Lower leg skin (tissue), 4 donors: ENCODE measurements at regions of chr6 and their contacts with region 1.

Region 1: DNA sequence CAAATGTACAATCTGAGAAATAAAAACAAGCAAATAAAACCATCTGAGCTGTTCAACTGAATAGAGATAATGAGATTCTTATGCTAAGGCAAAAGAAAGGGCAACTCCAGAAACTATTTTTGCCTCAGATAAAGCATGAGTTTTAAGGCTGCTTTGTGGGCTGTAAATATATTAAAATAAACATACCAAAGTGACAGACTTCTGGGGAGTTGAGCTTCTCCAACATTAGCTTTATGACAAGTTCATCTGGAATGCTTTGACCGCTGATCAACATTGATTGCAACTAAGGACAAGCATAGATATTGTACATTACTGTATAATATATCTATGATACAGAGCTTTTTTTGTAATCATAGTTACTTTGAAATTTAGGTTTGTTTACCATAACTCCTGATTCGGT is 19.3 kb downstream of the AK9 start:
- DNase-seq: no peak
- H3K4me3 ChIP-seq: no peak overlapping the region
- CTCF ChIP-seq: no peak
- POLR2A ChIP-seq: no peak

Region 2: DNA sequence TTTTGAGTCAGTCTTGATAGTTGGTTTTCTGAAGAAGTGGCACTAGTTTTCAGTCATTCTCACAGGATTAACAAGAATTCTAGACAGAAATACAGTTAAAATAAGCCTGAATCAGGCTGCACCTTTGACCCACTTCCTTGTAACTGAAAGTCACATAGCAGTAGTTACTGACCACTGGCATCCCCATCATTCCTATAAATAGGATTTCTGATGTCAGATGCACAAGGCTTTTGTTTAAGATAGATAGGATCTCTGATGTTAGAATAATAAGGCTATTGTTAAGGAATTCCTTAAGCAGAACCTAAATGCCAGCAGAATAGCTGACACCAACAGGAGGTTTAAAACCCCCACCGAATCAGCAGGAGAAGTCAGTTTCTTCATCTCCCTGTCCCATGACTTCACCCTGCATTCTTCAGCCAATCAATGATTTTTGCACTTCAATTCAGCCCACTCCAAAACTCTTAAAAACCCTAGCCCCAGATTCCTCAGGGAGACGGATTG is 158.1 kb before region 1 on chr6:
- intact Hi-C with region 1: loop called (anchors 10 kb)
- DNase-seq: no peak
- H3K4me3 ChIP-seq: no peak overlapping the region
- CTCF ChIP-seq: no peak
- POLR2A ChIP-seq: no peak

Region 3: DNA sequence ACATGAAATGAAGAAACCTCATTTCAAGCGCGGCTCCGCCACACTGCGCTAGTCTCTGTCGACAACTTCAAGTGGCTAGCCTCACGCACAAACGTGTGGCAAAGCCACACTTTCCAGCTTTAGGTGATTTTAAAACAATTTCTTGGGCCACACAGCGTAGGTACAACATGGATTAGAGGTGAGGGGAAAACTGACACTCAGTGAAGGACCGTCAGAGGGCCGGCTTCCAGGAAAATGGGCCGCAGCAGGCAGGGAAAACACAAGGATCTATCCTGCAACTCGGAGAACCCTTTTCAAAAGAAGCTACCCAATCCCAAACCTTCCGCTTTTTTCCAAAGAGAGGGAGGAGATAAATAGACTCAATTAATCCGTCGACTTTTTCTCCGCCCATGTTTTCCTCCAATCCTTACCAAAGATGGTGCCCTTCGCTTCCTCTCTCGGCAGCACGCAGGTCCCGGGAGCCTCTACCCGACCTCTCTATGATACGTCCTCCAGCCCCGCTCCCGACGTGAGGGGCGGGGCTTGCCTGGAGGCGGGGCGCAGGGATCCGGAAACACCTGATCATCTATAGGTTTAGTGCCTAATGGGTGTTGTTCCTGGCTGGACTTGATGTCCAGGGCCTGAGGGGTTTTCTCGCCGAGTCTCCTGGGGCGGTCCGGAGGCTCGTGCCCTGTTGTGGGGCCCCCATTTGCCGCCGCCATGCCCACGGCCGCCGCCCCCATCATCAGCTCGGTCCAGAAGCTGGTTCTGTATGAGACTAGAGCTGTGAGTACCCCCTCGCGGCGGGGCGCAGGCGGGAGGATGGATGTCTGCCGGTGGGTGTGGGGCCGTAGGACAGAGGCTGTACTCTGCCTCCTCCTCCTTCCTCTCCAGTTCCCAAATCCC is 19.2 kb after region 1 on chr6 and contains the starts of genes AK9 and FIG4:
- intact Hi-C with region 1: no loop called
- DNase-seq: peak; percentile 95 to 98
- H3K4me3 ChIP-seq: peak within 1 kb of the TSS; percentile 80
- CTCF ChIP-seq: no peak
- POLR2A ChIP-seq: no peak
- total RNA-seq, gene AK9: 4.1 to 10.3 (median 6.4) TPM
- total RNA-seq, gene FIG4: 6.9 to 17.1 (median 10.6) TPM